ENCODE measurements at regions of chr2 and their contacts with region 1.

Region 1: DNA sequence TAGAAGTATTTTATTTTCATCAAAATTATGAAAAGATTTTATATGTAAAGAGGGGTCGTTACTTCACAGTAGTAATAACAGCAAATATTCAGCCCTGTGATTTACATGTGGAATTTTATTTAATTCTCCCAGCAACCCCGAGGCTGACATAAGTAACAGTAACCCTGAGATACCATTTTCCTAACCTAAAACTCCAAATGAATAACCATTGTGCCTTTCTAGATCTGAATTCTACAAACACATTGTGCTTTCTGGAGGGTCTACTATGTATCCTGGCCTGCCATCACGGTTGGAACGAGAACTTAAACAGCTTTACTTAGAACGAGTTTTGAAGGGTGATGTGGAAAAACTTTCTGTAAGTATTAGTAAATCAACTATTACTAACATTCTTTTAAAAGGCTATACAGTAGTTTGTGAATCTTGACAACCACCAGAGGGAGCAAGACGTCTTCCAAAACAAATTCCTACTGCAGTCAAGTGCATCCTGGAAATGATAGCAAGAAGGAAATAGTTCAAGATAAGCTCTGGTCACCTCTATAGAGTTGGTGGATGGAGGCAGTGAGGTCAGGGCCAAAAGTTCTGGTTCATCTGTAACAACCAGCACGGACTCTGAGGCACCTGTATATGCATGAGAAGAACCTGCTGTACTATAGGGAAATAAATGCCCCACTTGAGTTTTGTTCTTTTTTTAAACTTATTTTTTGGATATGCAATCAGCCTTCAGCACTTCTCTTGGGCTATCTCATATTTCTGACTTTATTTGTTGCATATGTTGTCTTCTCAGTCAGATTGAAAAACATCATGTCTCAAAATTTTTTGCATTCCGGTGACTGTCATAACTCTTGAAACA is 37.4 kb downstream of the ACTR2 start:
- DNase-seq: peak; percentile 74
- ATAC-seq: peak; percentile 70
- H3K4me3 ChIP-seq: no peak overlapping the region
- H3K27ac ChIP-seq: no peak overlapping the region
- H3K4me1 ChIP-seq: peaks cover 19% of the 10 kb centered on the region; the same call in 1 of the 2 replicates
- H3K27me3 ChIP-seq: no peaks in the 10 kb centered on the region
- CTCF ChIP-seq: peak; percentile 88

Region 2: GRCh38 chr2:65300761-65301711 is 36.0 kb after region 1 on chr2:
- CTCF ChIA-PET with region 1: no interaction called
- POLR2A ChIA-PET with region 1: interaction called, 17 read pairs
- intact Hi-C with region 1: no loop called
- DNase-seq: peak; percentile 80
- ATAC-seq: peak; percentile 78
- H3K4me3 ChIP-seq: peak overlapping the region; percentile 46; the same call in 1 of the 2 replicates
- H3K27ac ChIP-seq: peak overlapping the region; percentile 92
- H3K4me1 ChIP-seq: peaks cover 39% of the 10 kb centered on the region
- H3K27me3 ChIP-seq: no peaks in the 10 kb centered on the region
- CTCF ChIP-seq: no peak

Region 3: GRCh38 chr2:65554765-65555591 is 289.9 kb after region 1 on chr2:
- CTCF ChIA-PET with region 1: no interaction called
- POLR2A ChIA-PET with region 1: no interaction called
- intact Hi-C with region 1: loop called (anchors 1 kb)
- DNase-seq: peak; percentile 39
- ATAC-seq: peak; percentile 45
- H3K4me3 ChIP-seq: no peak overlapping the region
- H3K27ac ChIP-seq: no peak overlapping the region
- H3K4me1 ChIP-seq: peaks cover 5% of the 10 kb centered on the region
- H3K27me3 ChIP-seq: no peaks in the 10 kb centered on the region
- CTCF ChIP-seq: no peak

Measured in PC-3 (cell line).